H1 (cell line): ENCODE measurements at regions of chr22 and their contacts with region 1.

Region 1: GRCh38 chr22:30556388-30556787 is 9.8 kb upstream of the SEC14L6 start:
- DNase-seq: no peak
- H3K4me3 ChIP-seq: no peak overlapping the region
- H3K27ac ChIP-seq: no peak overlapping the region
- H3K4me1 ChIP-seq: peaks cover 0 to 11% (median 4%) of the 10 kb centered on the region in 4 experiments; a peak in 5 of 7 replicates
- H3K27me3 ChIP-seq: no peaks in the 10 kb centered on the region
- CTCF ChIP-seq: peak; percentile 34 to 47 (median 37)
- EP300 ChIP-seq: no peak
- POLR2A ChIP-seq: no peak
- RAD21 ChIP-seq: peak; percentile 50 to 63

Region 2: DNA sequence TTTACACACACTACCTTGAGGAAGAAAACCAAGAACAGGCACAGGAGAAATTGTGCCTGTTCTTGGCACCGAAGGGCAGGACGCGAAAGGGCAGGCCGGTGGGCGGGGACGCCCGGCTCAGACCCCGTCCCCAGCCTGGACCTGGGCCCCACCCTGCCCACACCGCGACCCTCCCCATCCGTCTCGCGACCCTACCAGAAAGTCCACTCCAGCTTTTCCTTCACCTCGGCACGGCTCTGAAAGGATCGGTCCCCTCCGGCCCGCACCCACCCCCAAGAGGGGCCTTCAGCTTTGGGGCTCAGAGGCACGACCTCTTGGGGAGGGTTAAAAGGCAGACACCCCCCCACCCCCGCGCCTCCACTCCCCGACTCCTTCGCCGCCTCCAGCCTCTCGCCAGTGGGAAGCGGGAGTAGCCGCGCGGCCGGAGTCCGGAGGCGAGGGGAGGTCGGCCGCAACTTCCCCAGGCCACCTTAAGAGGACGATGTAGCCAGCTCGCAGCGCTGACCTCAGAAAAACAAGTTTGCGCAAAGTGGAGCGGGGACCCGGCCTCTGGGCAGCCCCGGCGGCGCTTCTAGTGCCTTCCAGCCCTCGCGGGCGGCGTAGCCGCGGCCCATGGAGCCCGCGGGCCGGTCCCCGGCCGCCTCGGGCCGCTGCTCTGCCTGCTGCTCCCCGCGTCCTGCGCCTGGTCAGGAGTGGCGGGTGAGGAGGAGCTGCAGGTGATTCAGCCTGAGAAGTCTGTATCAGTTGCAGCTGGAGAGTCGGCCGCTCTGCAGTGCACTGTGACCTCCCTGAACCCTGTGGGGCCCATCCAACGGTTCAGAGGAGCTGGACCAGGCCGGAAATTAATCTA is 14.2 kb before region 1 on chr22:
- CTCF ChIA-PET with region 1: interaction called, 15 read pairs
- POLR2A ChIA-PET with region 1: interaction called, 3 read pairs
- DNase-seq: peak in 1 of 2 experiments; percentile 79
- H3K4me3 ChIP-seq: peak overlapping the region; percentile 23 to 68 (median 40)
- H3K27ac ChIP-seq: no peak overlapping the region
- H3K4me1 ChIP-seq: peaks cover 0 to 8% (median 4%) of the 10 kb centered on the region in 4 experiments; a peak in 4 of 7 replicates
- H3K27me3 ChIP-seq: peaks cover 5 to 13% (median 11%) of the 10 kb centered on the region in 4 experiments
- CTCF ChIP-seq: no peak
- EP300 ChIP-seq: no peak
- POLR2A ChIP-seq: no peak; a peak in 1 of 3 replicates
- RAD21 ChIP-seq: no peak; a peak in 1 of 4 replicates

Region 3: DNA sequence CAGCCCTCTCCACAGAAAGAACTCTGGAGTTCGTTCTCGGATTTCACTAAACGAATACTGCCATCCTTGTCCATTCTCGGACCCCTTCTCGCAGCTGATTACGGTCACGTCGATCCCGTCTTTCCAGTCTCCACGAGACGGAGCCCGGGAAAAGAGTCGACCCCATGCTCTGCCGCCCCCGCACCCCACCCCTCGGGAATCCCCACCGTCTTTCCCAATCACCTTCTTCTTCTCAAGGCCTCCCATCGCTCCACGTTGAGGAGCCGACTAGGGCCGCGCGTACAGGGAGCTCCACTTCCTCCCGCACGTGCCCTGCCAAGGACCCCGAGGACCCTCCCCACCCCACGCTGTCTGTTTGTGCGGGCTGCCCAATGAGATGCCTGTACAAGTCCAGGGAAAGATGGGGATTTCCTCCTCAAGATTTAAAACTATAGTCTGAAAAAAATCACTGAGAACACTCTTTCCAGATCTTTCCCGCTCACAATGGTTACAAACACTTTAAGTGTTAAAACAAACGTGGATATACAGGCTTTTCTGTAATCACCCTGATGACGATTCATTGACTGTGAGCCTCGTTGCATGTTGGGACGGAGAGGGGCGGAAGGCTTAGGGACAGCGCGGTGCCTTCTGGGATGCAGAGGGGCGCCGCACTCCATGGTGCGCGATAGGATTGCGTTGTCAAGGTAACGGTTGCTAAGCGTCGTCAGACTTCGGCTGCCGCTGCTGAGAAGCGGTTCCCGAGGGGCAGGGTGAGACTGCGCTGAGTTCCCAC is 35.4 kb after region 1 on chr22 and contains the start of gene PES1:
- CTCF ChIA-PET with region 1: interaction called, 11 read pairs
- POLR2A ChIA-PET with region 1: interaction called, 5 read pairs
- DNase-seq: peak; percentile 92 to 95
- H3K4me3 ChIP-seq: peak within 1 kb of the TSS; percentile 68 to 100 (median 94)
- H3K27ac ChIP-seq: peak within 1 kb of the TSS; percentile 94
- H3K4me1 ChIP-seq: peaks cover 0 to 8% (median 1%) of the 10 kb centered on the region in 4 experiments; a peak in 2 of 7 replicates
- H3K27me3 ChIP-seq: no peaks in the 10 kb centered on the region; a peak in 2 of 7 replicates
- CTCF ChIP-seq: no peak
- EP300 ChIP-seq: no peak
- POLR2A ChIP-seq: peak; percentile 55 to 71; a peak in 2 of 3 replicates
- RAD21 ChIP-seq: no peak
- total RNA-seq, gene PES1: 121 and 133 TPM in 2 replicates